ENCODE measurements at regions of chr1 and their contacts with region 1.

Region 1: GRCh38 chr1:87953732-87954344 is 625.2 kb downstream of the LMO4 start:
- DNase-seq: peak; percentile 62
- ATAC-seq: peak; percentile 49
- H3K4me3 Mint-ChIP-seq: no peak overlapping the region
- H3K27ac Mint-ChIP-seq: no peak overlapping the region
- H3K4me1 Mint-ChIP-seq: no peaks in the 10 kb centered on the region
- H3K27me3 Mint-ChIP-seq: peaks cover 11% of the 10 kb centered on the region
- CTCF ChIP-seq: peak; percentile 62

Region 2: GRCh38 chr1:87131809-87132283 is 822.0 kb before region 1 on chr1:
- CTCF ChIA-PET with region 1: interaction called, 3 read pairs
- POLR2A ChIA-PET with region 1: no interaction called
- intact Hi-C with region 1: loop called (anchors 10 kb)
- DNase-seq: peak; percentile 71
- ATAC-seq: peak; percentile 94
- H3K4me3 Mint-ChIP-seq: peak overlapping the region; percentile 71
- H3K27ac Mint-ChIP-seq: no peak overlapping the region
- H3K4me1 Mint-ChIP-seq: peaks cover 10% of the 10 kb centered on the region
- H3K27me3 Mint-ChIP-seq: peaks cover 22% of the 10 kb centered on the region
- CTCF ChIP-seq: peak; percentile 97

Region 3: DNA sequence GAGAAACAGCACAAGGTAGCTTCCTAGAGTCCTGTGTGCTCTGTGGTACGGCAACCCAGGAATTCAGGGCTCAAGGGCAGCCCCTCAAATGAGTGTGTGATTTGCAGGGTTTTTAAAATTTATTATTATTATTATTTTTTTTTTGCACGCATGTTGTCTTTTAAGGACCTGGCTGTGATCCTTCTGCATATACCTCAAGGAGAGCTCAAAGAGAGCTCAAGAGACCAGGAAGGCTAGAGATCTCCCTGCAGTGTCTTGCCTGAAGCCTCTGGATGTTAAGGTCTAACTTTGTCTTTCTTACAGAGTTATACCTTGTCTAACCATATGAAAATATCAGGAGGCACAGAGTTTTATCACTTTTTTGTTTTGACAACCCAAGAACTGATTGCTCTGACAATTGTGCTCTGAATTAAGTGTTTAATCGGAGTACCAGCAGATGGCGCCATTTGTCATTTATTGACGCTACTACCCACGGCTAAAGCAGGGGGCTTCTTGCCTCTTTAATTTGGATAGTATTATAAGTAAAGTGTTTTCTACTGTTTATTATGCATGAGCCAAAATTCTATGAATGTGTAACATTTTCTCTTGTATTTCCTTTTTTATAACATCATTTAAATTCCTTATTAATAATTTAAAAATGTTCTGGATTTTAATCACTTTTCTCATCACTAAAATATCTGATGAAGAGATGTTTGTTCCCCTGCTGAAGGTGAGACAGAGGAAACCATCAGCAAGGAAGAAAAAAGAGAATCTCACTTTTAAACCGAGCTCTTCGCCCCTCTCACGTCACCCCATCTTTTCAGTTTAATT is 660.9 kb before region 1 on chr1:
- CTCF ChIA-PET with region 1: interaction called, 46 read pairs
- POLR2A ChIA-PET with region 1: no interaction called
- intact Hi-C with region 1: loop called (anchors 1 kb)
- DNase-seq: peak; percentile 81
- ATAC-seq: peak; percentile 64
- H3K4me3 Mint-ChIP-seq: no peak overlapping the region
- H3K27ac Mint-ChIP-seq: no peak overlapping the region
- H3K4me1 Mint-ChIP-seq: no peaks in the 10 kb centered on the region
- H3K27me3 Mint-ChIP-seq: peaks cover 3% of the 10 kb centered on the region
- CTCF ChIP-seq: peak; percentile 81

Region 4: DNA sequence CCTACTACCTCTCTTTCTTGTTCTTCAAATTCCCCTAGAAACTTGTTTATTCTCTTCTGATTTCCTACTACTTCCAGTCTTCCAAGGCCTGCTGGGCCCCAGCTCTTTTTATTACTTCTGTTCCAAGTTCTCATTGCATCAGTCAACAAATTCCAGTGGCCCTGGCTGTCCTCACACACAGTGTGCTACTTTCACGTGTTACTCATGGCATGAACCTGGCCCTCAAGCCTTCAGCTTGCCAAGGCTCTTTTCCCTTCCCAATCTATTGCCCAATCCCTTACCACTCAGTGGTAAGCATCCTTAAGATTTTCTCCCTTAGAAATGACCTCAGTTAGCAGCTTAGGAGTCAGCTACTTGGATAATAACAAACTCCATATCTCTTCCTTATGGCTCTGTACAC is 11.7 kb before region 1 on chr1:
- CTCF ChIA-PET with region 1: interaction called, 13 read pairs
- POLR2A ChIA-PET with region 1: no interaction called
- intact Hi-C with region 1: no loop called
- DNase-seq: no peak
- ATAC-seq: no peak
- H3K4me3 Mint-ChIP-seq: no peak overlapping the region
- H3K27ac Mint-ChIP-seq: no peak overlapping the region
- H3K4me1 Mint-ChIP-seq: no peaks in the 10 kb centered on the region
- H3K27me3 Mint-ChIP-seq: peaks cover 3% of the 10 kb centered on the region
- CTCF ChIP-seq: no peak

Region 5: DNA sequence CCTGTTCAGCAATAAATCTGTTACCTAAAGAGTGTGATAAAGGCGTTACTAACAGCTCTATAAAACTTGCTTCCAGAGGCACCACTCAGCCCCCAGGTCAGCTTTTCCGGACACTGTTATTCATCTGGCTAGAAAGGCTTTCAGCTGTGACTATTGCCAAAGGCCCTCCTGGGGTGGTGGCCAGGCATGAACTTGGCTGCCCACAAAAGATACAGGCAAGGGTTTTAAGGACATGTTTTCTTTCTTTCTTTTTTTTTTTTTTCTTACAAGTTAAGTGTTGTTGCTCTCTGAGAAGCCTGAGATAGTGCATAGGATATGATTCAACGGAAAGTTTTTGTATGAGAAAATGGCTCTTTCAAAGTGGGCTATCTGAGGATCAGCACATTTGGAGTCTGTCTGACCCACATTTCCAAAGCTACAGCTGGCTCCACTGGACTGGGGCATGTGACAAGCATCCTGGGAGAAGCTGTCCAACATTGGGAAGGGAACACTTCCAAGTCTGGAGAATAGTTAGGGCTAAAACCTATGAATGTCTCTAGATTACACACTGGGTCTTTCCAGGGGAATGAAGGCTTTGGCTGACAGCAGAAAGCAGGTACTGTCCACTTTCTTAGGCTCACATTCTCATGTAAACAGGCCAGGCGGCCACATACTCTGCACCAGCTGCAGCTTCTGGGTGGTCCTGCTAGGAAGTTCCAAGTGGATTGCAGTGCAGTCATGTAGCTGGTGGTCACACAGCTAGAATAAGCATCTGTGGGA is 14.5 kb after region 1 on chr1:
- CTCF ChIA-PET with region 1: interaction called, 20 read pairs
- POLR2A ChIA-PET with region 1: no interaction called
- intact Hi-C with region 1: no loop called
- DNase-seq: no peak
- ATAC-seq: no peak
- H3K4me3 Mint-ChIP-seq: no peak overlapping the region
- H3K27ac Mint-ChIP-seq: no peak overlapping the region
- H3K4me1 Mint-ChIP-seq: no peaks in the 10 kb centered on the region
- H3K27me3 Mint-ChIP-seq: peaks cover 5% of the 10 kb centered on the region
- CTCF ChIP-seq: no peak

Region 6: DNA sequence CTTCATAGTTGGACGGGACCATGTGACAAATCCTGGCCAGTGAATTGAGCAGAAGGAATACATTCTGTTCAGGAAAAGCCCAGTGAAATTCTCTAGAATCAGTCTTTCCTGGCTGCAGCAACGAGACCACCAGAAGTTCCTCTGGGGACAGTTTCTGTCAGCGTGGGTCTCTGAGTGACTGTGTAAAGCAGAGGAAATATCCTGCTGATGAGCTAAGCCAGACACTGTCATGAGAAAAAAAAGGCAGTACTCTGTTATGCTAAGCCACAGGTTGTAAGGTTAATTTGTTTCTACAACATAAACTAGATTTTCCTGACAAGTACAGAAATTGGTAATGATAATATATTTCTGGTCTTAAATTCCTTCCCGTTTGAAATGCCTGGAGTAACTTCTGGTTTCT is 39.2 kb after region 1 on chr1:
- CTCF ChIA-PET with region 1: no interaction called
- POLR2A ChIA-PET with region 1: no interaction called
- intact Hi-C with region 1: no loop called
- DNase-seq: no peak
- ATAC-seq: no peak
- H3K4me3 Mint-ChIP-seq: no peak overlapping the region
- H3K27ac Mint-ChIP-seq: no peak overlapping the region
- H3K4me1 Mint-ChIP-seq: no peaks in the 10 kb centered on the region
- H3K27me3 Mint-ChIP-seq: no peaks in the 10 kb centered on the region
- CTCF ChIP-seq: no peak

Region 7: GRCh38 chr1:88407248-88407647 is 453.4 kb after region 1 on chr1:
- CTCF ChIA-PET with region 1: no interaction called
- POLR2A ChIA-PET with region 1: no interaction called
- intact Hi-C with region 1: no loop called
- DNase-seq: no peak
- ATAC-seq: no peak
- H3K4me3 Mint-ChIP-seq: no peak overlapping the region
- H3K27ac Mint-ChIP-seq: no peak overlapping the region
- H3K4me1 Mint-ChIP-seq: no peaks in the 10 kb centered on the region
- H3K27me3 Mint-ChIP-seq: no peaks in the 10 kb centered on the region
- CTCF ChIP-seq: no peak